ENCODE measurements at regions of chr4 and their contacts with region 1.

Region 1: GRCh38 chr4:6640292-6641163 is at the start of gene MRFAP1:
- DNase-seq: peak; percentile 94 to 96
- H3K4me3 ChIP-seq: peak within 1 kb of the TSS; percentile 45 to 99 (median 90)
- H3K27ac ChIP-seq: peak within 1 kb of the TSS; percentile 87 to 94 (median 88)
- H3K4me1 ChIP-seq: peaks cover 15 to 18% of the 10 kb centered on the region in 2 donors
- H3K27me3 ChIP-seq: no peaks in the 10 kb centered on the region
- CTCF ChIP-seq: no peak
- POLR2A ChIP-seq: peak in 1 of 2 donors; percentile 84
- total RNA-seq, gene MRFAP1: 258 to 314 (median 288) TPM

Region 2: DNA sequence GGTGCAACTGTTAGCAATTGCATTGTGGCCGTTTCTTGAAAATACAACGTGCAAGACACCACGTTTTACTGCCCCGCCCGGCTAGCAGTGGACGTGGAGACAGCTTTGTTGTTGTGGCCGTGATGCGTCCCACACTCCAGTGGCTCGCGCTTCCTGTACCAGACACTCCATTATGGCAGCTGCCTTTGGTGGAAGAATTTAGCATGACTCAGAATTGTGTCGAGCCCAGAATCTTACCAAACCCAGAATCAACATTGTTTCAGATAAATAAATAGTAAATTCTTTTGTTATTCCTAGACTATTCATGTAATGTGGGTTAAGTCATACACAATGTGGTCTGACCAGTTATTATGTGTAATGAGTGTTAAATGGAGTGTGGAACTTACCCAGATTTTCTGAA is 27.9 kb after region 1 on chr4:
- intact Hi-C with region 1: loop called (anchors 2 kb)
- DNase-seq: no peak
- H3K4me3 ChIP-seq: no peak overlapping the region
- H3K27ac ChIP-seq: no peak overlapping the region
- H3K4me1 ChIP-seq: peaks cover 5% of the 10 kb centered on the region in 2 donors
- H3K27me3 ChIP-seq: no peaks in the 10 kb centered on the region
- CTCF ChIP-seq: no peak
- POLR2A ChIP-seq: no peak

Region 3: GRCh38 chr4:6709230-6710114 is 68.9 kb after region 1 on chr4 and contains the start of gene MRFAP1L1:
- intact Hi-C with region 1: loop called (anchors 10 kb)
- DNase-seq: peak; percentile 98
- H3K4me3 ChIP-seq: peak within 1 kb of the TSS; percentile 65 to 87 (median 86)
- H3K27ac ChIP-seq: peak within 1 kb of the TSS; percentile 70 to 79 (median 76)
- H3K4me1 ChIP-seq: peaks cover 31 to 33% of the 10 kb centered on the region in 2 donors
- H3K27me3 ChIP-seq: no peaks in the 10 kb centered on the region
- CTCF ChIP-seq: peak in 2 of 6 experiments; percentile 14 to 15
- POLR2A ChIP-seq: peak in 1 of 2 donors; percentile 67
- total RNA-seq, gene MRFAP1L1: 70.5 to 93.9 (median 76.2) TPM

Region 4: GRCh38 chr4:7192252-7193029 is 551.9 kb after region 1 on chr4 and contains the start of gene SORCS2:
- intact Hi-C with region 1: no loop called
- DNase-seq: peak; percentile 71 to 72
- H3K4me3 ChIP-seq: peak within 1 kb of the TSS in 1 of 3 donors; percentile 37
- H3K27ac ChIP-seq: no peak within 1 kb of the TSS
- H3K4me1 ChIP-seq: peaks cover 20 to 38% of the 10 kb centered on the region in 2 donors
- H3K27me3 ChIP-seq: no peaks in the 10 kb centered on the region
- CTCF ChIP-seq: peak in 4 of 6 experiments; percentile 15 to 97 (median 91)
- POLR2A ChIP-seq: no peak
- total RNA-seq, gene SORCS2: 1.7 to 13.6 (median 3.6) TPM

Region 5: DNA sequence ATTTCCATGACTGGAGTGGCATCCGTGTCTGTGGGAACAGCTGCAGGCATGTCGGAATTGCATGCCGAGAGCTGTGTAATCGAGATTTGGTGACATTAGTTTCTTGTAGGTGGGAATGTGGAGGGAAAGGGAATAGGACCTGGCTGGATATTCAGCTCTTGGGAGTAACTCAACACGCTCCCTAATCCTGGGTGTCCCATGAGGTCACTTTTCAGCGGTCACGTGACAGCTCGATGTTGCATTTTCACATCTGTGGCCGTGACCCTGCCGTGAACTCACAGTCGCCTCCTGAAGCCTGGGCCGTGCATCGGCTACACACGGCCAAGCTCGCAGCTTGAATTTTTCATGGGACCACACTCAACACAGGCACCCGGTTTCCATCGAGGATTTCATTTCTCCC is 820.0 kb after region 1 on chr4:
- intact Hi-C with region 1: no loop called
- DNase-seq: no peak
- H3K4me3 ChIP-seq: no peak overlapping the region
- H3K27ac ChIP-seq: no peak overlapping the region
- H3K4me1 ChIP-seq: peaks cover 6 to 12% of the 10 kb centered on the region in 2 donors
- H3K27me3 ChIP-seq: no peaks in the 10 kb centered on the region
- CTCF ChIP-seq: no peak
- POLR2A ChIP-seq: no peak

Measured in thyroid gland (tissue), 4 donors.